ENCODE measurements at regions of chr1 and their contacts with region 1.

Region 1: DNA sequence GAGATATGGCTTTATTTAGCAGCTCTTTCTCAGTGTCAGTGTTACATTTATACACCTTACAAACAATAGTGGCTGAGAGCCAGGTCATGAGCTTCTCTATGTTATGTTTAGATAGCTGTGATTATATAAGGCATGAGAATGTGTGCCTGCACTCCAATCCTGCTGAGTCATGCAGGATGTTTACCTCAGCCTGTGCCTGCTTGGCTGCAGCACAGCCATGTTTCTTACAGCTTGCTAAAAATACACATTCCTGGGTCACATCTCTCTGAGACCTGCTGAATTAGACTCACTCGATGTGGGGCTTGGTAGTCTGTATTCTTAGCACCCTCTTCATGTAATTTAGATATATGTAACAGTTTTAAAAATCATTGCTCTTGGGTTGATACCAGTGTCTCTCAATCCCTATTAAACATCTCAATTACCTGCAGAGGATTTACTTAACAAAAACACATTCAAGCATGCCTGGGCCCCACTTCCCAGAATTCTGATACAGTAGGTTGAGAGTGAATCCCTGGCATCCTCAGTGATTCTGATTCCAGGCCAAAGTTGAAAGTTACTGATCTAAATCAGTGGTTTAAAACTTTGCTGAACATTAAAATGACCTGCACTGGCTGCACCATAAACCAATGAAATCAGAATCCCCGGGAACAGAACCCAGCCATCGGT is 107.5 kb downstream of the GDAP2 start:
- DNase-seq: peak; percentile 98
- H3K4me3 ChIP-seq: no peak overlapping the region
- H3K27ac ChIP-seq: peak overlapping the region; percentile 82
- H3K4me1 ChIP-seq: peaks cover 39% of the 10 kb centered on the region
- H3K27me3 ChIP-seq: no peaks in the 10 kb centered on the region
- CTCF ChIP-seq: no peak
- POLR2A ChIP-seq: peak; percentile 49

Region 2: GRCh38 chr1:117077267-117077666 is 744.6 kb before region 1 on chr1:
- CTCF ChIA-PET with region 1: no interaction called
- POLR2A ChIA-PET with region 1: no interaction called
- dilution Hi-C with region 1: no loop called
- intact Hi-C with region 1: loop called (anchors 10 kb)
- DNase-seq: peak; percentile 90
- H3K4me3 ChIP-seq: no peak overlapping the region
- H3K27ac ChIP-seq: peak overlapping the region; percentile 36
- H3K4me1 ChIP-seq: peaks cover 13% of the 10 kb centered on the region
- H3K27me3 ChIP-seq: no peaks in the 10 kb centered on the region
- CTCF ChIP-seq: no peak
- POLR2A ChIP-seq: no peak

Region 3: GRCh38 chr1:117466761-117467160 is 355.2 kb before region 1 on chr1:
- CTCF ChIA-PET with region 1: no interaction called
- POLR2A ChIA-PET with region 1: no interaction called
- dilution Hi-C with region 1: no loop called
- intact Hi-C with region 1: loop called (anchors 5 kb)
- DNase-seq: peak; percentile 86
- H3K4me3 ChIP-seq: peak overlapping the region in 2 of 3 experiments; percentile 52 to 53
- H3K27ac ChIP-seq: peak overlapping the region; percentile 89
- H3K4me1 ChIP-seq: peaks cover 28% of the 10 kb centered on the region
- H3K27me3 ChIP-seq: no peaks in the 10 kb centered on the region
- CTCF ChIP-seq: no peak
- POLR2A ChIP-seq: no peak

Region 4: DNA sequence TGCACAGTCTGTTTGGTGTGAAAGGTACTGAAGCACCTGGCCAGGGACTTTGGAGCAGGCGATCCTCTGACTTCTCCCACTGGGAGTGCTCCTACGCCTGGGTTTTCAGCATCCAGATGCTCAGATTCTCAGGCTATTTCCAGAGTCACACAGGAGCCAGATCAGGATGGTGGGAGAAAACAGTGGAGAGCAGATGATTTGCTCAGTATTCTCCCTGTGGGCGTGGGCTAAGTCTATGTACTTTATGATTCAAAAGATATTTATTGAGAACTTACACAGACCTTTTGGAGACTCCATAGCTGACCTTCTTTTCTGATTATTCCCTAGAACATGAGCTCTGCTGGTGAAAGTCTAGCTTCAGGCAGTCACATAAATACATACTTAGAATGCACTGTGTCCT is 81.4 kb before region 1 on chr1:
- CTCF ChIA-PET with region 1: no interaction called
- POLR2A ChIA-PET with region 1: no interaction called
- dilution Hi-C with region 1: no loop called
- intact Hi-C with region 1: no loop called
- DNase-seq: no peak
- H3K4me3 ChIP-seq: no peak overlapping the region
- H3K27ac ChIP-seq: no peak overlapping the region
- H3K4me1 ChIP-seq: no peaks in the 10 kb centered on the region
- H3K27me3 ChIP-seq: no peaks in the 10 kb centered on the region
- CTCF ChIP-seq: no peak
- POLR2A ChIP-seq: no peak

Region 5: DNA sequence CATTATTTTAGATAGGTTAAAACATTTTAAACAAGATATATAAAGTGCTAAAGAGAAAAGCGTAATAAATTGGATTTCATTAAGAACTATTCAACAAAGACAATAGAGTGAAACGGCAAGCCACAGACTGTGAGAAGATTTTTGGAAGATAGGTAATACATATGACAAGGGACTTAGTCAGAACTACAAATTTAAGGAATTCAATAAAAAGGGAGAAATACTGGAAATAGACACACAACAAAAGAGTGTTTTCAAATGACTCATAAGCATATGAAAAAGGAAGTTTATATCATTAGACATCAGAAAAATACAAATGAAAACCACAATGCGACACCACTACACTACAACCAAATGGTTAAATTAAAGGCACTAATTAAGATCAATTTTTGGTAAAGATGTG is 17.0 kb after region 1 on chr1:
- CTCF ChIA-PET with region 1: interaction called, 4 read pairs
- POLR2A ChIA-PET with region 1: no interaction called
- dilution Hi-C with region 1: no loop called
- intact Hi-C with region 1: loop called (anchors 1 kb)
- DNase-seq: peak; percentile 48
- H3K4me3 ChIP-seq: no peak overlapping the region
- H3K27ac ChIP-seq: peak overlapping the region; percentile 40
- H3K4me1 ChIP-seq: peaks cover 9% of the 10 kb centered on the region
- H3K27me3 ChIP-seq: no peaks in the 10 kb centered on the region
- CTCF ChIP-seq: no peak
- POLR2A ChIP-seq: no peak

Region 6: GRCh38 chr1:117929173-117929989 is 107.5 kb after region 1 on chr1 and contains the starts of genes GDAP2 and WDR3:
- CTCF ChIA-PET with region 1: interaction called, 4 read pairs
- POLR2A ChIA-PET with region 1: interaction called, 4 read pairs
- dilution Hi-C with region 1: no loop called
- intact Hi-C with region 1: loop called (anchors 1 kb)
- DNase-seq: peak; percentile 95
- H3K4me3 ChIP-seq: peak within 1 kb of the TSS; percentile 61 to 93 (median 77)
- H3K27ac ChIP-seq: peak within 1 kb of the TSS; percentile 52
- H3K4me1 ChIP-seq: peaks cover 16% of the 10 kb centered on the region
- H3K27me3 ChIP-seq: no peaks in the 10 kb centered on the region
- CTCF ChIP-seq: no peak
- POLR2A ChIP-seq: no peak
- total RNA-seq, gene GDAP2: 20.7 and 21.5 TPM in 2 replicates
- total RNA-seq, gene WDR3: 27.7 and 29.3 TPM in 2 replicates

Region 7: GRCh38 chr1:119140177-119141019 is 1318.5 kb after region 1 on chr1 and contains the start of gene WARS2:
- CTCF ChIA-PET with region 1: no interaction called
- POLR2A ChIA-PET with region 1: no interaction called
- dilution Hi-C with region 1: no loop called
- intact Hi-C with region 1: loop called (anchors 5 kb)
- DNase-seq: peak; percentile 97
- H3K4me3 ChIP-seq: peak within 1 kb of the TSS; percentile 14 to 71 (median 56)
- H3K27ac ChIP-seq: peak within 1 kb of the TSS; percentile 89
- H3K4me1 ChIP-seq: peaks cover 13% of the 10 kb centered on the region
- H3K27me3 ChIP-seq: no peaks in the 10 kb centered on the region
- CTCF ChIP-seq: no peak
- POLR2A ChIP-seq: peak; percentile 92
- total RNA-seq, gene WARS2: 11.8 and 13.1 TPM in 2 replicates